GM18951 (cell line): ENCODE measurements at regions of chr6 and their contacts with region 1.

Region 1: DNA sequence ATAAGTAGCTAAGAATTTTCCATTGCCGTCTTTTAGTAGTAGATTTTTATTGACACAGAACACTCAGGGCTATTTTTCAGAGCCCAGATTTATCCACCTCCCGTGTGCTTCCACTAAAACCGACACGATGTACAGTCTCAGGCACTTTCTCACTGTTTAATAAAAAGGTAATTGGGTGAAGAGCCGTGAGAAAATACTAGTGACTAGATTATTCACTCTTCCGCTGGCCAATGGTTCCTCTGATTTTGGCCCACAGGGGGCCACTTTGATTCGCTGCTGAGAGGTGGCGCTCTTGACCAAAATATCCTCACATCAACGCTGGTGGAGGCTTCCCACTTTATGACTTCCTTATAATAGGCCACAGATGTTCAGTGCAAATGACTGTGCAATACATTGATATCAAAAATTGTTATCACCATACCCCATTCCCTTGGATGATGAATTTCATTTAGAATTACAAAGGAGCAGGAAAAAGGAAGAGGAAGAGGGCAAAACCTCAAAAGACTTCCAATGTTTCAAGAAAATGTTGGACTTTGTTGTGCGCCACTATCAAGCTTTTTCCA is 12.3 kb upstream of the HDDC2 start:
- POLR2A ChIP-seq: no peak

Region 2: GRCh38 chr6:125759184-125759902 is 445.2 kb after region 1 on chr6:
- in situ Hi-C with region 1: loop called (anchors 5 kb)
- POLR2A ChIP-seq: no peak

Region 3: DNA sequence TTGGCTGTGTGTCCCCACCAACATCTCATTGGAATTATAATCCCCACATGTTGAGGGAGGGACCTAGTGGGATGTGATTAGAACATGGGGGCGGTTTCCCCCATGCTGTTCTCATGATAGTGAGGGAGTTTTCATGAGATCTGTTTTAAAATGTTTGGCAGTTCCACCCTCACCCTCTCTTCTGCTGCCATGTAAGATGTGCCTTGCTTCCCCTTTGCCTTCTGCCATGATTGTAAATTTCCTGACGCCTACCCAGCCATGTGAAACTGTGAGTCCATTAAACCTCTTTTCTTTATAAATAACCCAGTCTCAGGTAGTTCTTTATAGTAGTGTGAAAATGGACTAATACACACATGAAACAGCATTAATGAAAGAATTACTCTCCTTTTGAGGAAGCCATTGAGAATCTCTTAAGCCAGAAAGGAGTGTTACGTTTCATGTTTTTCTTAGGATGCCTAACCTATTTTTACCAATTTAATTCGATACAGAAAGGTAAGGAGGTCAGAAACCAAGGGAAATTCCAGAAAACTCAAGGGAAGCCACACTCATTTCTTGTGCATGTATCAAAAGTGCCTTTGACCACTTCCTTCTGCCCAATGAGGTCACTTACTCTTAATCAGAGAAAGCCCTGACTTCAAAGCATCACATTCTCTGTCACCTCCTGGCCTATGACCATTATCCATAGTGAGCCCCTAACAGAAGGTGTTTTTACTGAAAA is 617.8 kb after region 1 on chr6:
- in situ Hi-C with region 1: no loop called
- POLR2A ChIP-seq: no peak

Region 4: DNA sequence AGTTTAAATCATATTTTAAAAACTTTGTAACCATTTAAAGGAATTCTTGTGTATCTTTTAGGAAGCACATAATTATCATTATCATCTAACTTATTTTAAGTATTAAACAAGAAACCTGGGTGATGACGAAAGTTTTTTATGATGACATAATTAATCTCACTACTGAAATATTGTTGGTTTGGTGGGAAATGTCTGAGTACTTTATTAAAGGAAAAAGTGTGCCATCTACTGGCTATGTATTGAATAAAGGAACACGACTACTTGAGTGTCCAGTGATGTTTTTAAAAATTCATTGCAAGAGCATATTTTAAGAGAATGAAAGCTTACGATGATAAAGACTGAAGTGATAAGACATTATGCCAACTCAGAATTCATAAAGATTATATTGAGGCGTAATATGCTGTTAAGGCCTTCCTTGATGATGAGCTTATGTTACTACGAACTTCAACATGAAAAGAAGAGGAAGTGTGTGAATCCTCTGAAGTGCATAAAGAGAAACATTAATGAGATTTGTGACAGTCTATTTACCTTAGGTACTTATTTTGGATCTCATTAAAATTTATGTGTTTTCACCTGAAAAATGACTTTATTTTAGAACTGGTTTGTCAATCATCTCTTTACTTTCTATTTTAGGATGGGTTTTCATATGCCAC is 660.2 kb after region 1 on chr6:
- in situ Hi-C with region 1: loop called (anchors 10 kb)
- POLR2A ChIP-seq: no peak